ENCODE measurements at regions of chr3 and their contacts with region 1.

Region 1: GRCh38 chr3:157148196-157148889 is 11.6 kb downstream of the CCNL1 start:
- DNase-seq: no peak
- H3K4me3 ChIP-seq: no peak overlapping the region
- H3K27ac ChIP-seq: no peak overlapping the region
- H3K4me1 ChIP-seq: peaks cover 13% of the 10 kb centered on the region
- CTCF ChIP-seq: no peak

Region 2: GRCh38 chr3:157079676-157080369 is 68.5 kb before region 1 on chr3:
- CTCF ChIA-PET with region 1: no interaction called
- POLR2A ChIA-PET with region 1: no interaction called
- intact Hi-C with region 1: no loop called
- DNase-seq: no peak
- H3K4me3 ChIP-seq: no peak overlapping the region
- H3K27ac ChIP-seq: no peak overlapping the region
- H3K4me1 ChIP-seq: peaks cover 3% of the 10 kb centered on the region
- CTCF ChIP-seq: no peak

Region 3: GRCh38 chr3:157174649-157175498 is 26.5 kb after region 1 on chr3:
- CTCF ChIA-PET with region 1: no interaction called
- POLR2A ChIA-PET with region 1: interaction called, 24 read pairs
- intact Hi-C with region 1: no loop called
- DNase-seq: peak; percentile 100
- H3K4me3 ChIP-seq: peak overlapping the region; percentile 88
- H3K27ac ChIP-seq: peak overlapping the region; percentile 86
- H3K4me1 ChIP-seq: peaks cover 26% of the 10 kb centered on the region
- CTCF ChIP-seq: no peak

Measured in OCI-LY7 (cell line).